ENCODE measurements at regions of chr6 and their contacts with region 1.

Region 1: DNA sequence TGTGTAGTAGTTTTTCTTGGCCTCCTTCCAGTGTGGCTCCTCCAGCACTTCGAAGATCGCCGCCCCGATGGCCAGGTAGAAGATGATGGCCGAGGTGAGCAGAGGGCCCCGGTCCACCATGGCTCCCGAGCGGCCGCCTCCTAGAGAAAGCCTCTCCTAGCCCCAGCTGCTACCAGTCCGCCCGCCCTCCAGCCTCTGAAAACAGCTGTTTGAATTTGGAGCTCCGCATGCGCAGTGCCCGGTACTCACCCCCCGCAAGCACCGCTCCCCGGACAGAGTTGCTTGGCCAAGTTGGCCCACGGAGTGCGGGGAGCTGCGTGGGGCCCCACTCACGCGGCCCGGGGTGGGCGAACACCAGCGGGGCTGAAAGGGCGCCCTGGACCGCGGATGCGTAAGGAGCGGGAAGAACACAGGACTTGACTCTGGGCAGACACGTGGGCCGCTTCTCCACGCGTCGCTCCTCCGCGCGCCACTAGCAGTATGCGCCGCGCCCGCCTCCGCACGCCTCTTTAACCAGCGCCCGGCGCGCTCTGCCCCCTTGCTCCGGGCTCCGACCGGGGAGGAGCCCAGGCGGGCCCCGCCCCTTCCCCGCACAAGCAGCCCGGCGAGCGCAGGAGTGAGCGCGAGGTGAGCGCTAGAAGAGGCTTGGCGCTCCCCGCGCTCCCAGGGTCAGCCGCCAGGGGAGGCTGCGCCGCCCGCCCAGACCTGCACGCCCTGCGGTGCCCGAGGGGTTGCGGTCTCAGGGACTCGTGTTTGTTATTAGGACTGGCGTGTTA is at the start of gene KCNK5:
- DNase-seq: peak; percentile 89
- H3K4me3 Mint-ChIP-seq: peak within 1 kb of the TSS; percentile 87
- H3K27ac Mint-ChIP-seq: peak within 1 kb of the TSS; percentile 87
- H3K4me1 Mint-ChIP-seq: peaks cover 44% of the 10 kb centered on the region
- H3K27me3 Mint-ChIP-seq: peaks cover 1% of the 10 kb centered on the region
- total RNA-seq, gene KCNK5: 9.0 to 9.2 TPM

Region 2: GRCh38 chr6:37791156-37791919 is 1437.8 kb before region 1 on chr6:
- CTCF ChIA-PET with region 1: no interaction called
- intact Hi-C with region 1: no loop called
- DNase-seq: peak; percentile 95
- H3K4me3 Mint-ChIP-seq: no peak overlapping the region
- H3K27ac Mint-ChIP-seq: no peak overlapping the region
- H3K4me1 Mint-ChIP-seq: peaks cover 11% of the 10 kb centered on the region
- H3K27me3 Mint-ChIP-seq: no peaks in the 10 kb centered on the region

Region 3: GRCh38 chr6:38639498-38640215 is 589.5 kb before region 1 on chr6 and contains the start of gene BTBD9:
- CTCF ChIA-PET with region 1: no interaction called
- intact Hi-C with region 1: loop called (anchors 10 kb)
- DNase-seq: peak; percentile 79
- H3K4me3 Mint-ChIP-seq: peak within 1 kb of the TSS; percentile 89
- H3K27ac Mint-ChIP-seq: peak within 1 kb of the TSS; percentile 86
- H3K4me1 Mint-ChIP-seq: peaks cover 47% of the 10 kb centered on the region
- H3K27me3 Mint-ChIP-seq: no peaks in the 10 kb centered on the region
- total RNA-seq, gene BTBD9: 9.5 to 11.1 TPM

Region 4: DNA sequence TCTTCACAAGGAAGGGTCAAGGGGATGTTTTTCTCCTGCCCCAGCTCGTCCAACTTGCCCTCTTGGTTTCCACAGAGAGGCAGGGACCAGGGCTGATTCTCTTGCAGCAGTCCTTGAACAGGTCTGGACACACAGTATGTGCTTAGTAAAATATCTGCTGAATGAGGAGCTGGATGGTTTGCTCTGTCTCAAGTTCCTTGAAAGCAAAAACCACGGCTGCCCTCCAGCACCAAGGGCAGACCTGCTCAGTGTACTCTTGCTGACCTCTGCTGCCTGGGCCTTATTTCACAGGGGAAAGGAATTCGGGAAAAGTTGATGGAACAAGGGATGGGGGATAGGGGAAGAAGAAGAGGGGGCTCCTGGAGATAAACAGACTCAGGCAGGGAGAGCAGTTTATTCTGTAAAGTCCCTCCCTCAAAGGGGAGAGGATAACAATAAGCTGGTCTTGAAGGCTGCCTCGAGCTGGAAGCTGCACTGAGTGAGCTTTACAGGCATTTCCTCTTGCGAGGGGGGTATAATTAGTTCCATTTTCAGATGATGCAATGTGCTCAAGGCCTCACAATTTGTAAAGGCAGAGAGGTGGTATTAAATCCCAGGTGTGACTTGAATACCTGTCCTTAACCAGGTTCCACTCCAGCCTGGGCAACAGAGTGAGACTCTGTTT is 10.2 kb before region 1 on chr6:
- CTCF ChIA-PET with region 1: no interaction called
- intact Hi-C with region 1: no loop called
- DNase-seq: no peak
- H3K4me3 Mint-ChIP-seq: no peak overlapping the region
- H3K27ac Mint-ChIP-seq: peak overlapping the region; percentile 60
- H3K4me1 Mint-ChIP-seq: peaks cover 41% of the 10 kb centered on the region
- H3K27me3 Mint-ChIP-seq: no peaks in the 10 kb centered on the region

Region 5: DNA sequence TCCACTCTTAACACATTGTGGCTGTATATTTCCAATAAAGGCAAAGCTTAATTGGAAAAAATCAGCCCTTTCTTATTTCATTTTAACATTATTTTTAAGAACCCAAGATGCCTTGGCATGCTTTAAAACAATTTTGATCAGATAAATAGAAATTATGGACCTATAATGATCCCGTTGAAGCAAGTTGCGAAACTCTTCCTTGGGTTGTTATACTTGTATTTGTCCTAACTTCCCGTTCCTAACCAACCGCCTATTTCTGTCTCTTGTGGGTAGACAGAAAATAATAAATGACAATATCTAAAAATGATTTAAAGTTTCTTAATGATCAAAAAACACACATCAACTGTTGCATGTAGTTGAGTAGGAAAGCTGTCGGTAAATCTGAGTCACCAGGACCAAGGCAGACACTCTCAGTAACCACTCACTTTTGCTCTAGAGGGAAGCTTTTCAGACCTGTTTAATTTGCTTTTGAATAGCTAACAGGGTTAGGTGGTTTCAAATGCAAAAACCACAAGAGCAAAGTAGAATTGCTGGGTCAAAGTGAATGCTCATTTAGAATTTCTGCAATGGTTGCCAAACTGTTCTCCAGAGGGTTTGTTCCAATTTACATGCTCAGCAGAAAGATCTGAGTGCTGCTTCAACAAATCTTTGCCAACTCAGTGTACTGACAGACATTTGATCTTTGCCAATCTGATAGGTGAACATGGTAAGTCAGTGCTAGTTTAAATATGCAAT is 34.3 kb after region 1 on chr6:
- CTCF ChIA-PET with region 1: interaction called, 3 read pairs
- intact Hi-C with region 1: loop called (anchors 1 kb)
- DNase-seq: peak; percentile 42
- H3K4me3 Mint-ChIP-seq: no peak overlapping the region
- H3K27ac Mint-ChIP-seq: no peak overlapping the region
- H3K4me1 Mint-ChIP-seq: peaks cover 8% of the 10 kb centered on the region
- H3K27me3 Mint-ChIP-seq: peaks cover 9% of the 10 kb centered on the region